Activated T-helper 1 cell treated with anti-CD3 and anti-CD28 coated beads, Interleukin-12 subunit alpha, Interleukin-12 subunit beta, Interleukin-2, Interleukin-4 antibody, amounts not matched to agents 30 ng/mL and 10 ng/mL and 1 ng/mL, durations not matched to agents 14 hours and 24 hours and 36 hours (primary cell): ENCODE measurements at regions of chr11 and their contacts with region 1.

Region 1: GRCh38 chr11:119356349-119357031 is 10.0 kb upstream of the MFRP start:
- DNase-seq: peak; percentile 61
- H3K4me3 Mint-ChIP-seq: peak overlapping the region; percentile 84
- H3K27ac Mint-ChIP-seq: peak overlapping the region; percentile 69
- H3K4me1 Mint-ChIP-seq: peaks cover 18% of the 10 kb centered on the region
- H3K27me3 Mint-ChIP-seq: peaks cover 61% of the 10 kb centered on the region

Region 2: GRCh38 chr11:119334174-119334930 is 22.1 kb before region 1 on chr11 and contains the start of gene RNF26:
- intact Hi-C with region 1: loop called (anchors 2 kb)
- DNase-seq: peak; percentile 93
- H3K4me3 Mint-ChIP-seq: peak within 1 kb of the TSS; percentile 97
- H3K27ac Mint-ChIP-seq: peak within 1 kb of the TSS; percentile 96
- H3K4me1 Mint-ChIP-seq: peaks cover 53% of the 10 kb centered on the region
- H3K27me3 Mint-ChIP-seq: peaks cover 25% of the 10 kb centered on the region
- total RNA-seq, gene RNF26: 26.1 and 27.9 TPM in 2 replicates

Region 3: GRCh38 chr11:119373921-119374631 is 17.6 kb after region 1 on chr11:
- intact Hi-C with region 1: loop called (anchors 1 kb)
- DNase-seq: no peak
- H3K4me3 Mint-ChIP-seq: no peak overlapping the region
- H3K27ac Mint-ChIP-seq: no peak overlapping the region
- H3K4me1 Mint-ChIP-seq: no peaks in the 10 kb centered on the region
- H3K27me3 Mint-ChIP-seq: peaks cover 12% of the 10 kb centered on the region

Region 4: GRCh38 chr11:119474682-119475596 is 118.4 kb after region 1 on chr11:
- intact Hi-C with region 1: loop called (anchors 1 kb)
- DNase-seq: peak; percentile 16
- H3K4me3 Mint-ChIP-seq: no peak overlapping the region
- H3K27ac Mint-ChIP-seq: no peak overlapping the region
- H3K4me1 Mint-ChIP-seq: no peaks in the 10 kb centered on the region
- H3K27me3 Mint-ChIP-seq: peaks cover 8% of the 10 kb centered on the region